Mammary epithelial cell (primary cell): ENCODE measurements at regions of chr11 and their contacts with region 1.

Region 1: DNA sequence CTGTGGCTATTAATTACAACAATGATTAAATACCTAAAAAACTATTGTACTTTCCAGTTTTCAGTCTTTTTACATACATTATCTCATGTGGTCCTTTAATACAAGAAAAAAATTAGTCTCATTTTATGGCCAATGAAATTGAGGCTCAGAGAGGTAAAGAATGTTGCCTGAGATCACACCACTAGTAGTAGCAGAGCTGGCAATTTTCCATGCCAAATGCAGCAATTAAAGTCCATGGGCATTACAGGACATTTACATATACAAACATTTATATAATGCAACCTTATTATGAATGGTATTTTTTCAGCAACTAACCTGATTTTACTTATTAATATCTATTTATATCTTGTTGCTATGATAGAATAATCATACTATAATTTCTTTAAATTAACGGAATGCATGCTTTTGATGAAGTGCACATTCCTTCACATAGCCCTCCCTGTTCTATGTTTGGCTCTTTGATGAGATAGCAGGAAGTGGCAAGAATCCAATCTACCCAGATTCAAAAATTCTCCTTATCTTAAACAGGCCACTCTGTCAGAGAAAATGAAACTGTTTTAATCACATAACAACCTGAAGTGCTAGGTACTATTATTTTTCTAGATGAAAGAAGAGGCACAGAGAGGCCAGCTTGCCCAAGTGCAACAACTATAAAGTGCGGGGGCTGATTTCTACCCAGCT is 120.9 kb upstream of the LDLRAD3 start:
- DNase-seq: no peak
- H3K4me3 ChIP-seq: no peak overlapping the region
- H3K27ac ChIP-seq: no peak overlapping the region
- H3K4me1 ChIP-seq: peaks cover 3% of the 10 kb centered on the region
- H3K27me3 ChIP-seq: no peaks in the 10 kb centered on the region
- CTCF ChIP-seq: no peak

Region 2: DNA sequence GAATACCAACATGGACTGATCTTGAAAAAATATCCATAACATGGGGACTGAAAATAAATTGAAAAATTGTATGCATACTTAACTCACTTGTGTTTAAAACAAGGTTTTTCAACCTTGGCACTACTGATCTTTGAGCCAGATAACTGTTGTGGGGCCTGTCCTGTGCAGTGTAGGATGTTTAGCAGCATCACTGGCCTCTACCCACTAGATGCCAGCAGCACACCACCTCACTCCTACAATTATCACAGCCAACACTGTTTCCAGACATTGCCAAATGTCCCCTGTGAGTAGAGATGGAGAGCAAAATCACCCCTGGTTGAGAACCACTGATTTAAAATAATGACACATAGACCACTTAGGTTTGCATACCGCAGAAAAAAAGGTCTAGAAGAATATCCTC is 358.6 kb before region 1 on chr11:
- CTCF ChIA-PET with region 1: no interaction called
- dilution Hi-C with region 1: no loop called
- in situ Hi-C with region 1: no loop called
- intact Hi-C with region 1: loop called (anchors 5 kb)
- DNase-seq: peak; percentile 12
- H3K4me3 ChIP-seq: no peak overlapping the region
- H3K27ac ChIP-seq: no peak overlapping the region
- H3K4me1 ChIP-seq: no peaks in the 10 kb centered on the region
- H3K27me3 ChIP-seq: no peaks in the 10 kb centered on the region
- CTCF ChIP-seq: peak in 1 of 2 donors; percentile 47

Region 3: DNA sequence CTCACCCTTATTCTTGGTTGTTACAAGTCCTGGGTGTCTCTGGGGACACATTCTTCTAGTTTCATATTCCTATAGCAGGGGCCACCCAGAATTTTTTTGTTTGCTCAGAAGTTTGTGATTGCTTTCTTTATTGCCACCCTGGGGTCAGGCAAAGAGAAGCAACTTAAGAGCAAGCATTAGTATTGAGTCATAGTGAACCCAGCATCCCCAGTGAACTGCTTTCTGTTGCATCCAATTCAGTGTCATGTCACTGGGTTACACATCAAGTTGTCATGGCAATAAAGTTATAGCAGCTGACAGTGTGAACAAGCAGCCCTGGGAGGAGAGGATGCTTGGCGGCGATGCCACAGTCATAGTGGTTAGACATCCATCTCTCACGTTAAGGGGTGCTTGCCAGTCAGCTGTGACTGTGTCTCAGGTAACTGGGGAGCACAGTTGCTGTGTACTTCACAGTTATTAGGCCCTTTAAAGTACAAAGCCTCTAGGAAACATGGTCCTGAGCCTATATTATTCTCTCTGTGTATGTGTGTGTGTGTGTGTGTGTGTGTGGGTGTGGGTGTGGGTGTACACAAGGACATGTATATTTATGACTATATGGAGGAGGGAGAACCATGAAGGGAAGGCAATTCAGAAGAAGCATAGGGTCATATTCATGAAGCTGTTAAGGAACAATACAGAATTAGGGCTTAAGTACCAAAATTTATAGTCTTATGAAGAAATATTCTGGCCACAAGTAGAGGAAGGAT is 107.9 kb before region 1 on chr11:
- CTCF ChIA-PET with region 1: interaction called, 18 read pairs
- dilution Hi-C with region 1: loop called (anchors 5 kb)
- in situ Hi-C with region 1: no loop called
- intact Hi-C with region 1: loop called (anchors 2 kb)
- DNase-seq: peak; percentile 32
- H3K4me3 ChIP-seq: no peak overlapping the region
- H3K27ac ChIP-seq: no peak overlapping the region
- H3K4me1 ChIP-seq: no peaks in the 10 kb centered on the region
- H3K27me3 ChIP-seq: no peaks in the 10 kb centered on the region
- CTCF ChIP-seq: no peak

Region 4: DNA sequence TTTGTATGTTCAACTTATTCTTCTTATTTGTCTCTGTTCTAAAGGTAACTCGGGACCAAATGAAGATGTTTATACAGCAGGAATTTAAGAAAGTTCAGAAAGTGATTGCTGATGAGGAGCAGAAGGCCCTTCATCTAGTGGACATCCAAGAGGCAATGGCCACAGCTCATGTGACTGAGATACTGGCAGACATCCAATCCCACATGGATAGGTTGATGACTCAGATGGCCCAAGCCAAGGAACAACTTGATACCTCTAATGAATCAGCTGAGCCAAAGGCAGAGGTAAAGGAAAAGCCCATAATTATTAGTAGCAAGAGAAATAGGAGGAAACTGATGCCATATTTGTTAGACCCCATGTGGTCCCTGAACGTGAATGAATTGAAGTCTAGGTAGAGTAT is 97.1 kb before region 1 on chr11:
- CTCF ChIA-PET with region 1: no interaction called
- dilution Hi-C with region 1: no loop called
- in situ Hi-C with region 1: no loop called
- intact Hi-C with region 1: no loop called
- DNase-seq: peak; percentile 81
- H3K4me3 ChIP-seq: no peak overlapping the region
- H3K27ac ChIP-seq: no peak overlapping the region
- H3K4me1 ChIP-seq: peaks cover 11% of the 10 kb centered on the region
- H3K27me3 ChIP-seq: no peaks in the 10 kb centered on the region
- CTCF ChIP-seq: no peak

Region 5: GRCh38 chr11:35943713-35944655 is 121.0 kb after region 1 on chr11 and contains the start of gene LDLRAD3:
- CTCF ChIA-PET with region 1: interaction called, 4 read pairs
- dilution Hi-C with region 1: no loop called
- in situ Hi-C with region 1: no loop called
- intact Hi-C with region 1: loop called (anchors 1 kb)
- DNase-seq: peak; percentile 76
- H3K4me3 ChIP-seq: peak within 1 kb of the TSS; percentile 77 to 93 (median 81)
- H3K27ac ChIP-seq: peak within 1 kb of the TSS; percentile 52
- H3K4me1 ChIP-seq: peaks cover 17% of the 10 kb centered on the region
- H3K27me3 ChIP-seq: no peaks in the 10 kb centered on the region
- CTCF ChIP-seq: no peak
- total RNA-seq, gene LDLRAD3: 15.3 to 18.4 TPM

Region 6: DNA sequence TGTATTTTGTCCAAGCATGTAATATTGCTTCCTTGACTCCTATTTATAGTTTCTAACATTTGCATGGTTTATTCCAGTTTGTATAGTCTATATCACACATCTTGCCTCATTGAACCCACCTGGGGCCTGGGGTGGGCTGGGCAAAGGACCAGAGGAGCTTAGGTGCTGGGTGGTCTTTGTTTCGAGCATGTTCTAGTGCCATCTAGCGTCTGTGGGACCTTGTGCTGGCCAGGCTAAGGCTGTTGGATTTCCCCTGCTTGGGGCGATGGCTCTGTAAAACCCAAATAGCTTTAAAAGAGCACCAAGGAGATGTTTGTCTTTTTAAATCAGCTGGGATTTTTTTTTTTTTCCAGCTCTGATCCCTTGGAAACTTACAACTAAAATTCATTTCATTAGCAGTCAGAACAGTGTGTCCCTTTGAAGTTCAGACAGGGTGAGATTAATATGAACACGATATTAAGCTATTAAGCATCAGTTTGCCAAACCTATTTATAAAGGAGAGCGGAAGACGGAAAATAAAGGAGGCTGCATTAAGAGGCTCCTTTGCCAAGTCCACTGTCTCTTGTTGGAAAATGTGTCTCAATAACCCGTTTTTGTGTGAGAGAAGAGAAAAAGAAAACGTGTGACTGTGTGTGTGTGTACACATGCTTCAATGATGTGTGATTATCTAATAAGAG is 308.9 kb after region 1 on chr11:
- CTCF ChIA-PET with region 1: interaction called, 10 read pairs
- dilution Hi-C with region 1: no loop called
- in situ Hi-C with region 1: no loop called
- intact Hi-C with region 1: no loop called
- DNase-seq: no peak
- H3K4me3 ChIP-seq: no peak overlapping the region
- H3K27ac ChIP-seq: no peak overlapping the region
- H3K4me1 ChIP-seq: peaks cover 6% of the 10 kb centered on the region
- H3K27me3 ChIP-seq: no peaks in the 10 kb centered on the region
- CTCF ChIP-seq: peak; percentile 58 to 60

Region 7: DNA sequence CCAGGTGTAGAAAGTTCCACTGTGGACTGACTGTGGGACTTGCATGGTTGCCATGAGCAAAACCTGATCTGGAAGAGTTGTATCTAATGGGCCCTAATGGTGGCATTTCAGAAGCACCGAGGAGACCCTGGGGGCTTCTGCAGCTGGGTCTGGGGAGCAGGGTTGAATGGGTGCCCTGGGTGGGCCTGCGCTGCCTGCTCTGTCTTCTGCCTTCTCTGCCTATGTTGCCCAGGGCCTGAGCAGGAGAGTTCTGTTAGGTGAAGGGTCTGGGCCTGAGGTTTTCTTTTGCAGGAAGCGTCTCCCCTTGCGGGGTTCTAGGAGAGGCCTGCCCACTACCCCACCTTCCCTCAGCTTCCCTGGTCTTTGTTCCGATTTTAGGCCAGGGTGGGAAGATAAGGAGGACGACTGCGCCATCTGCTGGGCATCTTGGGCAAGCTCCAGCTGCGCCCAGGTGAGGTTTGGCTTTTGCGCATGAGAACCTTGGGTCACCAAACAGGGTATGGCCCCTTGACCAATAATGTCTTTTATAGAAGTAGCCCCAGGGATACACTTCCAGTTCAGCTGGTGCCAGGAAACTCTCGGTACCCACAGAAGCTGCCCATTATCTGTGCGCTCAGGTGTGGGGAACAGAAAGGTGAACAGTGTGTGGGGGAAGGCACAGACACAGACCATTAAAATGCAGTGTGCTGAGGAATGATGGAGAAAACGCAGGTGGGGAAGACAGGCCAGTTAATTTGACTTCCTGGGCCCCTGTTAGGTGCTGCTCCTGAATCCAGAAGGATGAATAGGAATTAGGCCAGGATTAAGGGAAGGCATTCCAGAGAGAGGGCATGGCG is 443.1 kb after region 1 on chr11:
- CTCF ChIA-PET with region 1: interaction called, 15 read pairs
- dilution Hi-C with region 1: no loop called
- in situ Hi-C with region 1: loop called (anchors 10 kb)
- intact Hi-C with region 1: loop called (anchors 1 kb)
- DNase-seq: peak; percentile 29
- H3K4me3 ChIP-seq: no peak overlapping the region
- H3K27ac ChIP-seq: no peak overlapping the region
- H3K4me1 ChIP-seq: no peaks in the 10 kb centered on the region
- H3K27me3 ChIP-seq: no peaks in the 10 kb centered on the region
- CTCF ChIP-seq: peak; percentile 85 to 91